Activated CD4-positive, alpha-beta T cell treated with anti-CD3 and anti-CD28 coated beads for 36 hours (primary cell): ENCODE measurements at regions of chr22 and their contacts with region 1.

Region 1: GRCh38 chr22:50016988-50017700 is 4.6 kb upstream of the IL17REL start:
- DNase-seq: peak; percentile 93
- ATAC-seq: peak; percentile 64
- H3K4me3 Mint-ChIP-seq: peak overlapping the region; percentile 60
- H3K27ac Mint-ChIP-seq: peak overlapping the region; percentile 96
- H3K4me1 Mint-ChIP-seq: no peaks in the 10 kb centered on the region
- H3K27me3 Mint-ChIP-seq: no peaks in the 10 kb centered on the region

Region 2: DNA sequence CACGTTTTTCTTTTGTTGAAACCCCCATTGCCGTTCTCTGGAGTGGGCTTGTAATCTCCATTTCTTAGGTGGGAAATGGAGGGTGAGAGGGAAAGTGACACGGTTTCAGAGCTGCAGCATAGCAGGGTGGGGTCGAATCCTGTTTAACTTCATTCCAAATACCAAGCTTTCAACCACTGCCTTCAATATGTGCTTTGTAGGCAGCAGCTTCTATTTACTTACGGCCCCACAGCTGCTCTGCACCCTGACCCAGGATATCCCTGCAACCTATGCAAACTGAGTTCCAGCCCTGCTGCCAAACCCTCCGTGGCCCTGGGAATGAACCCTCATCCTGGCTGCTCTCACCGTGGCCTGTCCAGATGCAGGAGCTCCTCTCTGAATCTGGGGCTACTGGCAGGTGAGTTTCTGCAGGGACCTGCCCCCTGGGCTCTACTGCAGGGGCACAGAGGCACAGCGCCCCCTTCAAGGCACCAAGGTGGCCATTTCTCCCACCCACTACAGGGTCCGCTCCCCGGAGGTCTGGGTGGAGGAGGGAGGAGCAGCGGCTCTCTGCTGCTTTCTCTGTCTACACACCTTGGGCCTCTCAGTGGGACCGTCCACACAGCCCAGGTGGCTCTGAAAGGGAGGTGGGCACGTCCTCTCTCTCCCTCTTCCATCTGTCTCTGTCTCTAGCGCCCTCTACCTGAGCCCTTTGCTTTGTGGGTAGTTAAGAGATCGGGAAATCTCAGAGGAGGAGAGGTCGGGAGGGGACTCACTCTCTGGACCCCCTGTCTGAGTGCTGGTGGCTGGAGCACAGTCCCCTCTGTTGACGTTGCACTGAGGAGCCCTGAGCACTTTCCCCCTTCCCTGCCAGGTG is 468.6 kb before region 1 on chr22:
- CTCF ChIA-PET with region 1: no interaction called
- POLR2A ChIA-PET with region 1: no interaction called
- intact Hi-C with region 1: no loop called
- DNase-seq: no peak
- ATAC-seq: no peak
- H3K4me3 Mint-ChIP-seq: no peak overlapping the region
- H3K27ac Mint-ChIP-seq: no peak overlapping the region
- H3K4me1 Mint-ChIP-seq: no peaks in the 10 kb centered on the region
- H3K27me3 Mint-ChIP-seq: no peaks in the 10 kb centered on the region

Region 3: GRCh38 chr22:49838771-49839717 is 178.1 kb before region 1 on chr22:
- CTCF ChIA-PET with region 1: no interaction called
- POLR2A ChIA-PET with region 1: no interaction called
- intact Hi-C with region 1: loop called in 1 of 2 experiments (anchors 2 kb)
- DNase-seq: peak; percentile 92
- ATAC-seq: peak; percentile 87
- H3K4me3 Mint-ChIP-seq: peak overlapping the region; percentile 73
- H3K27ac Mint-ChIP-seq: peak overlapping the region; percentile 98
- H3K4me1 Mint-ChIP-seq: peaks cover 35% of the 10 kb centered on the region
- H3K27me3 Mint-ChIP-seq: no peaks in the 10 kb centered on the region

Region 4: GRCh38 chr22:49930739-49931412 is 86.3 kb before region 1 on chr22:
- CTCF ChIA-PET with region 1: no interaction called
- POLR2A ChIA-PET with region 1: no interaction called
- intact Hi-C with region 1: loop called (anchors 1 to 5 kb)
- DNase-seq: peak; percentile 77
- ATAC-seq: peak; percentile 47
- H3K4me3 Mint-ChIP-seq: peak overlapping the region; percentile 22
- H3K27ac Mint-ChIP-seq: peak overlapping the region; percentile 34
- H3K4me1 Mint-ChIP-seq: peaks cover 43% of the 10 kb centered on the region
- H3K27me3 Mint-ChIP-seq: no peaks in the 10 kb centered on the region

Region 5: DNA sequence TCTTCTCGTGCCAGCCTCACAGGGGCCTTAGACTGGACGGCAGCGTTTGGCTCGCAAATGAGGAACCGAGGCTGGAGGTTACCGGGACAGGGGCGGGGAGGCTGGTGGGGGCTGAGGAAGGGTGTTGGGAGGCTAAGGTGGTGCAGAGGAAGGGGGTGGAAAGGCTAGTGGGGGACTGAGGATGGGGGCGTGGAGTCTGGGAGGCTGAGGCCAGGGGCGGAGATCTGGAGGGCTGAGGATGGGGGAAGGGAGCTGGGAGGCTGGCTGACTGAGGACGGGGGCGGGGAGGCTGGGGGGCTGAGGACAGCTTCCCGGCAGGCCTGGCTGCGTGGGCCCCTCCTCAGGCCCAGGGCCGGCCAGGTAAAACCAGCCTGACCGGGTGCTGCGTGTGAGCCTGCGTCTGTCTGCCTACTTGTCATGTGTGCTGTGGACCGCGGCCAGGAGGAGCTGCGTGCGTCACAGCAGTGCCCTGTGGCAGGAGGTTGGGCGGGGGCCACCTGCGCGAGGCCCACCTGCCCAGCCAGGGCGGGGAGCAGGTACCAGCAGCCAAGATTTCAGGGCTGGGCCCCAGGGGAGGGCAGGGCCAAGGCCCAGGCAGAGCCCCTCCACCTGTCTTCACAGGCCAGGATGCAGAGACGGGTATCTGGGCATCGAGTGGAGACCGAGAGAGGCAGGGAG is 66.0 kb before region 1 on chr22:
- CTCF ChIA-PET with region 1: no interaction called
- POLR2A ChIA-PET with region 1: no interaction called
- intact Hi-C with region 1: no loop called
- DNase-seq: peak; percentile 95
- ATAC-seq: peak; percentile 98
- H3K4me3 Mint-ChIP-seq: peak overlapping the region; percentile 22
- H3K27ac Mint-ChIP-seq: peak overlapping the region; percentile 47
- H3K4me1 Mint-ChIP-seq: peaks cover 3% of the 10 kb centered on the region
- H3K27me3 Mint-ChIP-seq: no peaks in the 10 kb centered on the region

Region 6: DNA sequence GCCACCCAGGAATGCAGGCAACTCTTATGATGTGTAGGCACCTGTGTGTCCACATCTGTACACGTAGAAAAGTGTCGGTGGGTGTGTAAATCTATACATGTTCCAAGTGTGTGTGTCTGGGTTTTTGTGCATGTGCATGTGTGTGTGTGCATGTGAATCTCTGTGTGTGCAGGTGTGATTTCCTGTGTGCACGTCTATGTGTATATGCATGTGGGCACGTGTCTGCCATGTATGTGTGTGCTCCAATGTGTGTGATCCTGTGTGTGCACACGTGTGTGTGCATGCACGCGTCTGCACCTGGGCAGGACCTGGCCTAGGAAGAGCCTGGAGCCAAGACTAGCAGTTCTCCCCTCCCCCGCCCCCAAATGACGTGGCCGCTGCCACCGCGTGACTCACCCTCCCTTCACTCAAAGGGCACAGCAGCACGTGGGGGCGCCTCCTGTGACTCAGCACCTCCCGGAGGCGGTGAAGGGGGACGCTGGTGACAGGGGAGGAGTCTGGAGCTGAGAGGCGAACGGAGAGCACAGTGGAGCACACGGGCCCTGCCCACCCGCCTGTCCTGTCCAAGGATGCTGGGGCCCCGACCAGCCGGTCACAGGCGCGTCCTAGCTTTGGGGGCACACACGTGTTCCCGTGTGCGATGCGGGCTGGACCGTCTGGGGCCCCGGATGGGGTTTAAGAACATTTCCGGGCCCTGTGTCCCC is 46.5 kb before region 1 on chr22:
- CTCF ChIA-PET with region 1: no interaction called
- POLR2A ChIA-PET with region 1: interaction called, 4 read pairs
- intact Hi-C with region 1: loop called in 1 of 2 experiments (anchors 2 kb)
- DNase-seq: peak; percentile 99
- ATAC-seq: peak; percentile 87
- H3K4me3 Mint-ChIP-seq: no peak overlapping the region
- H3K27ac Mint-ChIP-seq: peak overlapping the region; percentile 93
- H3K4me1 Mint-ChIP-seq: peaks cover 38% of the 10 kb centered on the region
- H3K27me3 Mint-ChIP-seq: no peaks in the 10 kb centered on the region

Region 7: DNA sequence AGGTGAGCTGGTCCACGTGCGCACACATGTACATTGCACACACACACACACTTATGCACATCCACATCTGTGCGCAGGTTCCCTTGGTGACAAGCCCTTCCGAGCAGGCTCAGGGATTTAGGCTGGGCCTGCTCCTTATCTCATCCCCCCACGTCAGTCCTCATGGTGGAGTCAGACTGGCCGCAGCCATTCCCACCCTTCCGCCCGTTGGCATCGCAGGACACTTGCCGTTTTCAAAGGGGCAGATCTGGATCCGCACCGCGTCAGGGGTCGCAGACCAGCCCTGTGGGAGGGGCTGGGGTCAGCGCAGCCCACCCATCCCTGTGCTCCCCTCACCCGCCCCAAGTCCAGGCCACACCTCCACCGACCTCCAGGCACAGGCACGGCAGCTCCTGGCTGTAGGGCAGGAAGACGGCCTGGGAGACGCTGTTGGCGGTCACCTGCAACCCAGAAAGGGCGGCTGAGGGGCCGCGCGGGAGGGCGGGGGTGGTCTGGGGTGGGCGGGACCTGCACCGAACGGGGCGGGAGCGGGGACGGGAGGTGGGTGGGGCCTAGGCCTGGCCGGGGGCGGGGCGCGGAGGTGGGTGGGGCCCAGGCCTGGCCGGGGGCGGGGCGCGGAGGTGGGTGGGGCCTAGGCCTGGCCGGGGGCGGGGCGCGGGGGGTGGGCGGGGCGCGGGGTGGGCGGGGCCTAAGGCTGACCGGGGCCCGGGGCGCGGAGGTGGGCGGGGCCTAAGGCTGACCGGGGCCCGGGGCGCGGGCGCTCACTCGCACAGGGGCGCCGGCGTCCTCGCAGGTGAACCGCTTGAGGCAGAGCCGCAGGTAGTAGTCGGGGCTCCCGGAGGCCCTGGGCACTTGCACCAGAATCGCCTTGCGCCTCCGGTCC is 17.8 kb before region 1 on chr22:
- CTCF ChIA-PET with region 1: interaction called, 6 read pairs
- POLR2A ChIA-PET with region 1: no interaction called
- intact Hi-C with region 1: loop called in 1 of 2 experiments (anchors 2 kb)
- DNase-seq: peak; percentile 70
- ATAC-seq: peak; percentile 52
- H3K4me3 Mint-ChIP-seq: no peak overlapping the region
- H3K27ac Mint-ChIP-seq: no peak overlapping the region
- H3K4me1 Mint-ChIP-seq: peaks cover 7% of the 10 kb centered on the region
- H3K27me3 Mint-ChIP-seq: peaks cover 4% of the 10 kb centered on the region